ENCODE measurements at regions of chr16 and their contacts with region 1.

Region 1: DNA sequence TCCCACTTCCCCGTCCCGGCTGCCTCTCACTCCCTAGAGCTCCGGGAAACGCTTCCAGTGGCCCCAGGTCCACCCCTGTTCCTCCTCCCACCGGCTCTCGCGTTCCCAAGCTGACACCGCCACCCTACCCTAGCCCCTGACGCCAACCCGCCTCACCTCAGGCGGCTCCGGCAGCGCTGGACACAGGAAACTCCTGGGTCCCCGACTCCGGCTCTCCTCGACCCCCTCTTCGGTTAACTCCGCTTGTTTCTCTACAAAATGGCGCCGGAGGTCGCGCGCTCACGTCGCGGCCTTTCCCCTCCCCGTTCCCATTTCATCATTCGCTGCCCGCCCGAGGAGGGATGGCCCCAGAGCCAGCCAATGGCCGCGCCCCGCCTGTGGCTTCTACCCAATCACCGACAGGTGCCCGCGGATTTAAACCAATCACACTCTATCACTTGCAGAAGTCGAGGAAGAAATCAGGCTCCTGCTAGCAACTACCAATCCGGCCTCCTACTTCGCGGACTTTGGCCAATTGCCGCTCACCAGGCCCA is at the start of gene CNOT1:
- DNase-seq: peak; percentile 99
- H3K4me3 Mint-ChIP-seq: peak within 1 kb of the TSS; percentile 94
- H3K27ac Mint-ChIP-seq: peak within 1 kb of the TSS; percentile 100
- H3K4me1 Mint-ChIP-seq: peaks cover 29% of the 10 kb centered on the region
- H3K27me3 Mint-ChIP-seq: no peaks in the 10 kb centered on the region
- total RNA-seq, gene CNOT1: 270 and 272 TPM in 2 replicates

Region 2: GRCh38 chr16:58236231-58236690 is 393.4 kb before region 1 on chr16:
- intact Hi-C with region 1: loop called (anchors 2 kb)
- DNase-seq: peak; percentile 52
- H3K4me3 Mint-ChIP-seq: peak overlapping the region; percentile 81
- H3K27ac Mint-ChIP-seq: no peak overlapping the region
- H3K4me1 Mint-ChIP-seq: peaks cover 13% of the 10 kb centered on the region
- H3K27me3 Mint-ChIP-seq: peaks cover 31% of the 10 kb centered on the region

Region 3: GRCh38 chr16:58392215-58393137 is 237.2 kb before region 1 on chr16 and contains the start of gene GINS3:
- intact Hi-C with region 1: loop called (anchors 1 kb)
- DNase-seq: peak; percentile 82
- H3K4me3 Mint-ChIP-seq: peak within 1 kb of the TSS; percentile 95
- H3K27ac Mint-ChIP-seq: peak within 1 kb of the TSS; percentile 95
- H3K4me1 Mint-ChIP-seq: peaks cover 21% of the 10 kb centered on the region
- H3K27me3 Mint-ChIP-seq: peaks cover 11% of the 10 kb centered on the region
- total RNA-seq, gene GINS3: 23.8 and 25.3 TPM in 2 replicates

Region 4: DNA sequence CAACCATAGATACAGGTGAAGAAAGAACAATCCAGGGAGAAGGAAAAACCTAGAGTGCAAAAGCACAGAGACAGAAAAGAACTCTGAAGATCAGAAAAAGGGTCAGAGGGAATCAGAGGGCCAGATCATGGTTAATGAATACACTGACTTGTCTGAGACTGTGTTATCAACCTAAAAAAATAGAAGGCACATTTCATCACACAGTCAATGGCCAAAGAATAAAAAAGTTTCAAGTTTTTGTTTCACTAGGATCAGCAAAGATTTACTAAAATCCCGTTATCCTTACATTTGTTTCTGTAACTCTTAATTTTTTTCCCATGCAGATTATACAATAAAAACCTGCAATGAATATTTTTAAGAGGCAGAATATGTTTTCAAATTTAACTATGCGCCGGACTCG is 38.6 kb before region 1 on chr16:
- intact Hi-C with region 1: loop called (anchors 5 kb)
- DNase-seq: no peak
- H3K4me3 Mint-ChIP-seq: no peak overlapping the region
- H3K27ac Mint-ChIP-seq: no peak overlapping the region
- H3K4me1 Mint-ChIP-seq: peaks cover 15% of the 10 kb centered on the region
- H3K27me3 Mint-ChIP-seq: no peaks in the 10 kb centered on the region

Region 5: GRCh38 chr16:58733671-58734458 is 104.2 kb after region 1 on chr16 and contains the start of gene GOT2:
- intact Hi-C with region 1: loop called (anchors 1 kb)
- DNase-seq: peak; percentile 78
- H3K4me3 Mint-ChIP-seq: peak within 1 kb of the TSS; percentile 100
- H3K27ac Mint-ChIP-seq: peak within 1 kb of the TSS; percentile 99
- H3K4me1 Mint-ChIP-seq: peaks cover 27% of the 10 kb centered on the region
- H3K27me3 Mint-ChIP-seq: no peaks in the 10 kb centered on the region
- total RNA-seq, gene GOT2: 135 and 137 TPM in 2 replicates

Measured in activated T-helper 1 cell treated with anti-CD3 and anti-CD28 coated beads, Interleukin-12 subunit alpha, Interleukin-12 subunit beta, Interleukin-2, Interleukin-4 antibody, amounts not matched to agents 30 ng/mL and 10 ng/mL and 1 ng/mL, durations not matched to agents 14 hours and 24 hours and 36 hours (primary cell).